B cell (primary cell): ENCODE measurements at regions of chr19 and their contacts with region 1.

Region 1: DNA sequence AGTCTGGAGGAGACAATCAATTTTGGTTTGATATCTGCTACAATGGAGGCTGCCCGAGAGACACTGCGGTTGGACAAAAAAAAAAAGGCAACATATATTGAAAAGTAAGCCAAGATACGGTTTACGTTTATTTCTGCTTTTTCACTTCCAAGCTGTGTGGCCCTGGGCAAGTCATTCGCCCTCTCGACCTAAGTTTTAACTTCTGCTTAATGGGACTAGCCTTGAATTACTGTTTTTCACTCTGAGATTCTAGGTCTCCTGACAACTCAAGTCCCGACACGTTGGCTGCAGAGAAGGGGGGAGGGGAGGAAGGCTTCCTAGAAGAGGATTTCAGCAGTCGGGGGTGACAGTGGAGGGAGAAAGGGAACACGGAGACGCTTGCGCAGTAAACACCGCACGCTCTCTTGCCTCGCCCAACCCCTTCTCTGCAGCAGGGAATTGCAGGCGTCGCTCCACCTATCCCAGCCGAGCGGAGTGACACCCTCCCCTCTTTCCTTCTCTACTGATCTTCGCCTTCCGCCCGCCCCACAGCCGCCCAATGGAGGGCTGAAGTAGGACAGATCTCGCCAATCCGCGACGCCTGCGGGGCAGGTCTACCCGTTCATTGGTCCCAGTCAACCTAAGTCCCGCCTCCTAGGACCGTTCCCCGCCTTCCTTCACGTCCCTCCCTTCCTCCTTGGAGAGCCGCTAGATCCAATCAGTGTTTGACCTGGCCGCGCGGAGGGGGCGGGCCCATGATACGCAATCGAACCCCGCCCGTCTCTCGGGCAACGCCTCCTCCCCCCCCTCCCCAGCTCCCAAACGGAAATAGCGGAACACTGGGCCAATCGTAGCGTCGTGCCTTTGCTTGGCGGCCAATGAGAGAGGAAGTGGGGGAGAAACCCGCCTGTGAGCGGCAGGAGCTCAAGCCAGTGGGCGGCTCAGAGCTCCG is 529 bp upstream of the AP2A1 start:
- DNase-seq: peak; percentile 100
- ATAC-seq: peak; percentile 85
- H3K4me3 ChIP-seq: peak overlapping the region; percentile 49 to 78 (median 71)
- H3K4me3 Mint-ChIP-seq: peak overlapping the region; percentile 93
- H3K27ac ChIP-seq: peak overlapping the region; percentile 74 to 76
- H3K27ac Mint-ChIP-seq: peak overlapping the region; percentile 98
- H3K4me1 ChIP-seq: peaks cover 15 to 24% of the 10 kb centered on the region in 2 donors
- H3K4me1 Mint-ChIP-seq: peaks cover 35% of the 10 kb centered on the region
- H3K27me3 ChIP-seq: no peaks in the 10 kb centered on the region
- H3K27me3 Mint-ChIP-seq: no peaks in the 10 kb centered on the region
- CTCF ChIP-seq: no peak

Region 2: GRCh38 chr19:48468775-48469288 is 1297.4 kb before region 1 on chr19:
- CTCF ChIA-PET with region 1: no interaction called
- POLR2A ChIA-PET with region 1: no interaction called
- intact Hi-C with region 1: loop called (anchors 2 kb)
- DNase-seq: peak; percentile 100
- ATAC-seq: peak; percentile 87
- H3K4me3 ChIP-seq: peak overlapping the region; percentile 8 to 90 (median 83)
- H3K4me3 Mint-ChIP-seq: peak overlapping the region; percentile 92
- H3K27ac ChIP-seq: peak overlapping the region; percentile 52 to 84
- H3K27ac Mint-ChIP-seq: peak overlapping the region; percentile 89
- H3K4me1 ChIP-seq: peaks cover 11 to 15% of the 10 kb centered on the region in 2 donors
- H3K4me1 Mint-ChIP-seq: peaks cover 17% of the 10 kb centered on the region
- H3K27me3 ChIP-seq: peaks cover 0 to 3% (median 0%) of the 10 kb centered on the region in 4 experiments
- H3K27me3 Mint-ChIP-seq: no peaks in the 10 kb centered on the region
- CTCF ChIP-seq: no peak

Region 3: DNA sequence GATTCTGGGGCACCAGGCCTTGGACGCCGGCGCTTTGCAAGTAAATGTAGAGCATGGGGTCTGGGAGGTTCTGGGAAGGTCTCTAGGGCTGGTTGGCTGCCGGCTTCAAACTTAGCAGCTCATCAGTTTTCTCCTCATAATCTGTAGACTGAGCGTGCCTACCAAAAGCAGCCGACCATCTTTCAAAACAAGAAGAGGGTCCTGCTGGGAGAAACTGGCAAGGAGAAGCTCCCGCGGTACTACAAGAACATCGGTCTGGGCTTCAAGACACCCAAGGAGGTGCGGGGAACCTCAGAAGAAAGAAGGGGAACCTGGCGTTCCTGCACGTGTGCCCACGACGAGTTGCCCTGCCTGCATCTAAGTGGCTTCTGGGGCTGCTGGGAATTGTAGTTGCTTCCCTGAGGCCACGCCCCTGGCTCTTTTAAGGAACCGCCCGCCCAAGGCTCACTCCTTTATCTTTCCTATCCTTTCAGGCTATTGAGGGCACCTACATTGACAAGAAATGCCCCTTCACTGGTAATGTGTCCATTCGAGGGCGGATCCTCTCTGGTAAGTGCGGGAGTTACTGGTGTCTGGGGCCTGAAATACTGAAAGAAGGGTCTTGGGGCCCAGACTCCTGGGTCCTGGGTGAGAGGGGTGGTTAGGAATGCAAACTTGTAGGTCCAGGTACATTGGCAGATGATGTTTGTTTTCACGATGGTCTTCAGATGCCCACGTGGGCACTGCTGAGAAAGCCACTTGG is 269.1 kb before region 1 on chr19:
- CTCF ChIA-PET with region 1: no interaction called
- POLR2A ChIA-PET with region 1: no interaction called
- intact Hi-C with region 1: loop called (anchors 5 kb)
- DNase-seq: peak; percentile 92
- ATAC-seq: peak; percentile 9
- H3K4me3 ChIP-seq: peak overlapping the region; percentile 74 to 99 (median 98)
- H3K4me3 Mint-ChIP-seq: peak overlapping the region; percentile 98
- H3K27ac ChIP-seq: peak overlapping the region; percentile 97 to 99
- H3K27ac Mint-ChIP-seq: peak overlapping the region; percentile 99
- H3K4me1 ChIP-seq: peaks cover 32 to 61% of the 10 kb centered on the region in 2 donors
- H3K4me1 Mint-ChIP-seq: peaks cover 71% of the 10 kb centered on the region
- H3K27me3 ChIP-seq: no peaks in the 10 kb centered on the region
- H3K27me3 Mint-ChIP-seq: no peaks in the 10 kb centered on the region
- CTCF ChIP-seq: no peak

Region 4: DNA sequence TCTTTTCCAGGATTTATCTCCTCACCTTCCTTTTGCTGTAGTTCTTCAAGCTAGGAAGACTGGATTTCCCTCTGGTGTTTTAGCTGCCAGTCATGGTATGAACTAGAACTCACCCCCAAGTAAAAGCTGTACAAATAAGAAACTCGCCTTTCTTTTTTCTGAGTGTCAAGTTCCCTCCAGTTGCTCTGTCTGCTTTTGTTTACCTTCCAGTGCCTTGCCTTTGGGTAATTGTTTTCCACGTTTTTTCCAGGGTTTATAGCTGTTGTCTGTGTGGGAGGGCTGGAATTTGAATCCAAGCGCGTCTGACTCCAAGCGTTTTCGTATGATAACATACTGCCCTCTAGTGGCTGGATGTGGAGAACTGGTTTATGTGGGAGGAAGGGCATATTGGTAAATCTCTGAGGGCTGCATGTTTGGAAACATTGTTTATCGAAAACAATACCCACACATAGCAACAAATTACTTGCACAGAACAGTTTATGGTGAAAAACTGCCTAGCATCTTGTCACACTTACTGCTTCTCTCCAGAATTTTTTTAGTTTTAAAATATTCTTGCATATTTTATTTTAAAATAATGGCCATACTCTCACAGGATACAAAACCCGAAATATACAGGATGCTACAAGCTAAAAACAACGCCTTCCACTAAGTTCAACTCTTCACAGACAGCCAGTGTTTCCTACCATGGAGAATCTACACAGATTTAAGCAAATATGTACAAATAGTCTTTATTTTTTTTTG is 219.3 kb before region 1 on chr19:
- CTCF ChIA-PET with region 1: no interaction called
- POLR2A ChIA-PET with region 1: no interaction called
- intact Hi-C with region 1: no loop called
- DNase-seq: peak; percentile 88
- ATAC-seq: peak; percentile 63
- H3K4me3 ChIP-seq: peak overlapping the region in 2 of 5 experiments; percentile 1 to 18
- H3K4me3 Mint-ChIP-seq: peak overlapping the region; percentile 73
- H3K27ac ChIP-seq: no peak overlapping the region
- H3K27ac Mint-ChIP-seq: peak overlapping the region; percentile 79
- H3K4me1 ChIP-seq: peaks cover 4 to 8% of the 10 kb centered on the region in 2 donors
- H3K4me1 Mint-ChIP-seq: peaks cover 13% of the 10 kb centered on the region
- H3K27me3 ChIP-seq: no peaks in the 10 kb centered on the region
- H3K27me3 Mint-ChIP-seq: no peaks in the 10 kb centered on the region
- CTCF ChIP-seq: peak; percentile 91

Region 5: GRCh38 chr19:49651029-49651825 is 115.0 kb before region 1 on chr19:
- CTCF ChIA-PET with region 1: no interaction called
- POLR2A ChIA-PET with region 1: no interaction called
- intact Hi-C with region 1: no loop called
- DNase-seq: no peak
- ATAC-seq: no peak
- H3K4me3 ChIP-seq: no peak overlapping the region
- H3K4me3 Mint-ChIP-seq: no peak overlapping the region
- H3K27ac ChIP-seq: no peak overlapping the region
- H3K27ac Mint-ChIP-seq: no peak overlapping the region
- H3K4me1 ChIP-seq: no peaks in the 10 kb centered on the region
- H3K4me1 Mint-ChIP-seq: no peaks in the 10 kb centered on the region
- H3K27me3 ChIP-seq: no peaks in the 10 kb centered on the region
- H3K27me3 Mint-ChIP-seq: no peaks in the 10 kb centered on the region
- CTCF ChIP-seq: no peak

Region 6: DNA sequence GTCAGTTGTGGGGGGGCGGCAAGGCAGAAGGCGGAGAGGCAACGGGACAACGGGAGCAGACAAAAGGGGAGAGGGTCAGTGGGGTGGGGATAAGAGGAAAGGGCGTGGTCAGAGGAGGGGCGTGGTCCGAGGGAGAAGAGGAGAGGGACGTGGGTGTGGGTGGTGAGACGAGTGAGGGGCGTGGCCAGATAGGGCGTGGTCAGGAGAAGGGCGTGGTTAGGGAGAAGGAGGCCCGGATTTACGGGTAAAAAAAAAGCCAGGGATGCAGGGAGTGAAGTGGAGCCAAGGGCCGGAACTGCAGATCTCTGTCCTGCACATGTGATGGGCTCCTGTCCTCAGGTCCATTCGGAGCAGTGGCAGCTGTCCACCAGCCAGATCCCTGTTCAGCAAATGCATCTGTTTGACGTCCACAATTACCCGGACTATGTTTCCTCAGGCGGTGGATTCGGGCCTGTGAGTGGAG is 53.8 kb before region 1 on chr19:
- CTCF ChIA-PET with region 1: interaction called, 10 read pairs
- POLR2A ChIA-PET with region 1: no interaction called
- intact Hi-C with region 1: loop called (anchors 1 kb)
- DNase-seq: no peak
- ATAC-seq: no peak
- H3K4me3 ChIP-seq: no peak overlapping the region
- H3K4me3 Mint-ChIP-seq: no peak overlapping the region
- H3K27ac ChIP-seq: no peak overlapping the region
- H3K27ac Mint-ChIP-seq: no peak overlapping the region
- H3K4me1 ChIP-seq: peaks cover 2 to 5% of the 10 kb centered on the region in 2 donors
- H3K4me1 Mint-ChIP-seq: peaks cover 4% of the 10 kb centered on the region
- H3K27me3 ChIP-seq: no peaks in the 10 kb centered on the region
- H3K27me3 Mint-ChIP-seq: peaks cover 4% of the 10 kb centered on the region
- CTCF ChIP-seq: no peak

Region 7: GRCh38 chr19:49817964-49818648 is 51.8 kb after region 1 on chr19 and contains the start of gene MED25:
- CTCF ChIA-PET with region 1: interaction called, 6 read pairs
- POLR2A ChIA-PET with region 1: interaction called, 12 read pairs
- intact Hi-C with region 1: loop called (anchors 1 kb)
- DNase-seq: peak; percentile 98
- ATAC-seq: peak; percentile 56
- H3K4me3 ChIP-seq: peak within 1 kb of the TSS; percentile 69 to 99 (median 94)
- H3K4me3 Mint-ChIP-seq: peak within 1 kb of the TSS; percentile 97
- H3K27ac ChIP-seq: peak within 1 kb of the TSS; percentile 89 to 98
- H3K27ac Mint-ChIP-seq: peak within 1 kb of the TSS; percentile 98
- H3K4me1 ChIP-seq: peaks cover 13 to 29% of the 10 kb centered on the region in 2 donors
- H3K4me1 Mint-ChIP-seq: peaks cover 41% of the 10 kb centered on the region
- H3K27me3 ChIP-seq: no peaks in the 10 kb centered on the region
- H3K27me3 Mint-ChIP-seq: no peaks in the 10 kb centered on the region
- CTCF ChIP-seq: peak; percentile 44
- total RNA-seq, gene MED25: 123 and 126 TPM in 2 replicates

Region 8: DNA sequence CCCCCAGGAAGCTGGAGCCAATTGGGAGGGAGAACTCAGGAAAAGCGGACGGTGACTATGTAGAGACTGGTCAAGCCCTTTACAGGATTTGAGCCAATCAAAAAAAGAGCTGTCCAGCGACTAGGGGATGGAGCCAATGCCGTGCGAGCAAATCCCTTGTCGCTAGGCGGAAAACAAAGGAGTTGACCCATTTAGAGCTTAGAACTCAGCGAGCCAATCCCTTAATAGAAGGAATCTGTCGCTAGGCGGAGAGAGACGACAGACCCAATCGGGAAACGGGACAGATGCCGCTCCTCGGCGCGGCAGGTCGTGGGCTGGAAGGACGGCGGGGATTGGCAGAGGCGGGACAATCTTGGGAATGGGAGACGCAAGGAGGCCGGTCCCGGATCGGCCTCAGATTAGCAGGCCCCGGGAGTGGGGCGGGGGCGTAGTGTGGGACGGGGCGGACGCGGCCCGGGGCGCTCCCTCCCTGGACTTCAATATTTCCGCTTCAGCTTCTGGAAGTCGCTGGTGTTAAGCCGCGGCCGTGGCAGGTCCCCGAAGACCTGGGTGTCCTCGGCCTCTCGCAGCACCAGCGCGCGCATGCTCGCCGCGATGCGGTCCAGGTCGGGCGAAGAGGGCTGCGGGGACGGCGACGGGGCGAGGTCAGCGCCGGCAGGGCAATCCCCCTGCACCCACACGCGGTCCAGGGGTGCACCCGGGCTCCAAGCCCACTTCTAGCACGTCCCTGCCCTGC is 103.3 kb after region 1 on chr19:
- CTCF ChIA-PET with region 1: interaction called, 4 read pairs
- POLR2A ChIA-PET with region 1: interaction called, 5 read pairs
- intact Hi-C with region 1: loop called (anchors 1 kb)
- DNase-seq: peak; percentile 97
- ATAC-seq: peak; percentile 80
- H3K4me3 ChIP-seq: peak overlapping the region; percentile 42 to 74 (median 69)
- H3K4me3 Mint-ChIP-seq: no peak overlapping the region
- H3K27ac ChIP-seq: peak overlapping the region; percentile 97 to 98
- H3K27ac Mint-ChIP-seq: peak overlapping the region; percentile 77
- H3K4me1 ChIP-seq: peaks cover 30 to 50% of the 10 kb centered on the region in 2 donors
- H3K4me1 Mint-ChIP-seq: peaks cover 42% of the 10 kb centered on the region
- H3K27me3 ChIP-seq: no peaks in the 10 kb centered on the region
- H3K27me3 Mint-ChIP-seq: no peaks in the 10 kb centered on the region
- CTCF ChIP-seq: no peak

Region 9: GRCh38 chr19:49929611-49930482 is 163.6 kb after region 1 on chr19:
- CTCF ChIA-PET with region 1: no interaction called
- POLR2A ChIA-PET with region 1: no interaction called
- intact Hi-C with region 1: loop called (anchors 1 kb)
- DNase-seq: peak; percentile 99
- ATAC-seq: peak; percentile 84
- H3K4me3 ChIP-seq: peak overlapping the region; percentile 70 to 98 (median 89)
- H3K4me3 Mint-ChIP-seq: peak overlapping the region; percentile 100
- H3K27ac ChIP-seq: peak overlapping the region; percentile 80 to 97
- H3K27ac Mint-ChIP-seq: peak overlapping the region; percentile 98
- H3K4me1 ChIP-seq: peaks cover 20 to 32% of the 10 kb centered on the region in 2 donors
- H3K4me1 Mint-ChIP-seq: peaks cover 53% of the 10 kb centered on the region
- H3K27me3 ChIP-seq: no peaks in the 10 kb centered on the region
- H3K27me3 Mint-ChIP-seq: no peaks in the 10 kb centered on the region
- CTCF ChIP-seq: no peak